CD14-positive monocyte (primary cell): ENCODE measurements at regions of chr1 and their contacts with region 1.

Region 1: GRCh38 chr1:61138921-61139774 is 56.8 kb downstream of the NFIA start:
- DNase-seq: peak; percentile 62 to 86 (median 83)
- H3K4me3 ChIP-seq: no peak overlapping the region
- H3K4me3 Mint-ChIP-seq: peak overlapping the region in 1 of 2 donors; percentile 44
- H3K27ac ChIP-seq: peak overlapping the region in 1 of 2 donors; percentile 33
- H3K27ac Mint-ChIP-seq: peak overlapping the region in 6 of 7 donors; percentile 21 to 75 (median 38)
- H3K4me1 ChIP-seq: peaks cover 22 to 31% of the 10 kb centered on the region in 2 donors
- H3K4me1 Mint-ChIP-seq: peaks cover 30% of the 10 kb centered on the region
- H3K27me3 ChIP-seq: no peaks in the 10 kb centered on the region
- H3K27me3 Mint-ChIP-seq: peaks cover 0 to 2% (median 1%) of the 10 kb centered on the region in 3 donors
- CTCF ChIP-seq: no peak

Region 2: DNA sequence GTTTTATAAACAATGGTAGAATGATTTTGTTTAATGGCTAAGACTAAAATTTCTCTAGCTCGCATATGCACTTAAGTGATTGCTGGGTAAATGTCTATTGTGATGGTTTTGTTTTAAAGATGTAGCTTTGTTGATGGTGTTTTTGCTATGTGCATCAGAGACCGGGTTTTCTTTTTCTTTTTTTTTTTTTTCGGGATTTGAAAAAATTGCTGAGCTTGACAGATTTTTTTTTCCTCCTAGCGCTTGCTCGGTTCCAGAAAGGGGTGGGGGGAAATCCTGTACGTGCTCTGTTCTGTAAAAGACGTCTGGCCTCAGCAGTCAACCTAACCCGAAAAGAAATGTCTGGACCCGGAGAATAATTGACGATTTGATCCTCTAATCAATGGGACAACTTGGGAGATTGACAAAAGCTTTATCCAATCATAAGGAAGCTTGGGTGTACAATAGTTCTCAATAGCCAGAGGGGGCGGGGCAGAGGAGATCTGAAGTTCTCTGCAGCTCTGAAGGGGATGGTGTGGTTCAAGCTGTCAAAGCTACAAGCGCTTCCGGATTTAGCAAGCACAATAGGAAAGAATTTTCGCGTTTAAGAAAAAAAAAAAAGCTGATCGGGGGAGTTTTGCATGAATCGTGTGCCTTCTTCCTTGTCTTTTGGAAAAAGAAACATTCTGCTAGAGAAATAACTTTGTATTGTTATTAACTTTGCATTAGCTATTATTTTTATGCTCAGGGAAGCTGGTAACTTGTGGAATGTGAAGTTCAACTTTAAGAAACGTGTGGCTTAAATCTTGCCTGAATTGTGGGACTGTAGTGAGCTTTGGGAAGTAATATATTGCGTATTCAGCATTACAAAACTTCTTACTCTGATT is 61.2 kb before region 1 on chr1:
- intact Hi-C with region 1: loop called in 1 of 2 experiments (anchors 10 kb)
- DNase-seq: peak; percentile 87 to 95 (median 93)
- H3K4me3 ChIP-seq: peak overlapping the region; percentile 62 to 97 (median 94)
- H3K4me3 Mint-ChIP-seq: peak overlapping the region; percentile 94 to 97
- H3K27ac ChIP-seq: peak overlapping the region; percentile 21 to 91
- H3K27ac Mint-ChIP-seq: peak overlapping the region; percentile 88 to 97 (median 95)
- H3K4me1 ChIP-seq: peaks cover 41 to 48% of the 10 kb centered on the region in 2 donors
- H3K4me1 Mint-ChIP-seq: peaks cover 48% of the 10 kb centered on the region
- H3K27me3 ChIP-seq: peaks cover 0 to 5% of the 10 kb centered on the region in 2 donors
- H3K27me3 Mint-ChIP-seq: peaks cover 5 to 7% (median 7%) of the 10 kb centered on the region in 3 donors
- CTCF ChIP-seq: no peak

Region 3: DNA sequence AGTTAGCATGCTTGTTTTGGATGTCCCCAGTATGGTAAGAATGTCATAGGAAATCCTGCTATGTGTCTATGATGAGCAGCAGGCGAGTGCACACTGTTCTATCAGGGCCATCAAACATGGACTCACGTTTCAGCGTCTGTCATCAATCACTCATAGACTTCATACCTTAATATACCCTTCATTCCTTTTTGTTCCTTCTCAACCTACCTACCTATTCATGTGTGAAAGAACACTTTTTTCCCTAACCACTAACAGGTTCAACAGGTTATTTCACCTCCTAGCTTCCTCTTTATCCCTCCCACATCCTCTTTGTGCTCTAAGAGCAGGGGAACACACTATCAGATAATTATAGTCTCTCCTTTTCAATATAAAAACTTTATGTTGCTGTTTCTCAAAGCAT is 285.2 kb after region 1 on chr1:
- intact Hi-C with region 1: no loop called
- DNase-seq: no peak
- H3K4me3 ChIP-seq: no peak overlapping the region
- H3K4me3 Mint-ChIP-seq: no peak overlapping the region
- H3K27ac ChIP-seq: no peak overlapping the region
- H3K27ac Mint-ChIP-seq: no peak overlapping the region
- H3K4me1 ChIP-seq: peaks cover 0 to 5% of the 10 kb centered on the region in 2 donors
- H3K4me1 Mint-ChIP-seq: peaks cover 17% of the 10 kb centered on the region
- H3K27me3 ChIP-seq: no peaks in the 10 kb centered on the region
- H3K27me3 Mint-ChIP-seq: peaks cover 0 to 4% (median 2%) of the 10 kb centered on the region in 3 donors
- CTCF ChIP-seq: no peak